ENCODE measurements at regions of chr9 and their contacts with region 1.

Region 1: DNA sequence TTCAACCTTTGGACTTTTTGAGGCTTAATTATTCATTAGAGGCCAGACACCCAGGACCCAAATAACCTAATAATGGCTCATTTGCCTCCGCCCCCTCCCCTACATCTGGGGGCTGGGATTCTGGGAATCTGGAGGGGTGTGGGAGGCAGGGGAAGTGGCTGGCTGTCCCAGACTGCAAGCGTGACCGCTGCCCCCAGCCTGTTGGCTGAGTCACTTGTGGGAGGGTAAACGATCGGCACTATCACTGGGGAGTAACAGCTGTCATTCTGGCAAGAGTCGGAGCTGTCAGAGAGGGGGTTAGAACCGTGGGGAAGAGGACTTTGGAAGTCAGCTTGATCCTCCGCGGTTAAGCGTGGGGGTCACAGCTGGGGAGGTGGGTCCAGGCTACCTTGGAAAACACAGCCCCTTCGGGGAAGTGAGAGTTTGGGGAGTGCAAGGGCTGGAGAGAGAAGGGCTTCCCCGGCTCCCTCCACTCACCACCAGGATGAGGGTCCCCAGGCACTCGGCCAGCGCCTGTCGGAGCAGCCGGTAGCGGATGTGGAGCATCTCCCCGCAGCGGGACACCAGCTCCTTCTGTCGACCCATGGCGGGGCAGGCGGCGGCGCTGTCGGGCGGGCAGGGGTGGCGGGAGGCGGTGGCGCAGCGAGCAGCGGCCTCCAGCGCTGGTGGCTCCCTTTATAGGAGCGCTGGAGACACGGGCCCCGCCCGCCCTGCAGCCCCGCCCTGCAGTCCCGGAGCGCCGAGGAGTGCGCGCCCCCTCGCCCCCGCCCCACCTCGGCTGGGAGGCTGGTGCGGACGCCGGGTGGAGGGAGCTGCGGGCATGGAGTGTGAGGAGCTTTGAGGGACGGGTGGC is at the start of gene AQP3:
- DNase-seq: peak; percentile 86
- ATAC-seq: peak; percentile 81
- H3K4me3 Mint-ChIP-seq: peak within 1 kb of the TSS; percentile 80
- H3K27ac Mint-ChIP-seq: no peak within 1 kb of the TSS
- H3K4me1 Mint-ChIP-seq: peaks cover 35% of the 10 kb centered on the region
- H3K27me3 Mint-ChIP-seq: peaks cover 28% of the 10 kb centered on the region
- CTCF ChIP-seq: no peak
- total RNA-seq, gene AQP3: 3.0 to 3.6 TPM (median 3.5 TPM) in 3 replicates

Region 2: DNA sequence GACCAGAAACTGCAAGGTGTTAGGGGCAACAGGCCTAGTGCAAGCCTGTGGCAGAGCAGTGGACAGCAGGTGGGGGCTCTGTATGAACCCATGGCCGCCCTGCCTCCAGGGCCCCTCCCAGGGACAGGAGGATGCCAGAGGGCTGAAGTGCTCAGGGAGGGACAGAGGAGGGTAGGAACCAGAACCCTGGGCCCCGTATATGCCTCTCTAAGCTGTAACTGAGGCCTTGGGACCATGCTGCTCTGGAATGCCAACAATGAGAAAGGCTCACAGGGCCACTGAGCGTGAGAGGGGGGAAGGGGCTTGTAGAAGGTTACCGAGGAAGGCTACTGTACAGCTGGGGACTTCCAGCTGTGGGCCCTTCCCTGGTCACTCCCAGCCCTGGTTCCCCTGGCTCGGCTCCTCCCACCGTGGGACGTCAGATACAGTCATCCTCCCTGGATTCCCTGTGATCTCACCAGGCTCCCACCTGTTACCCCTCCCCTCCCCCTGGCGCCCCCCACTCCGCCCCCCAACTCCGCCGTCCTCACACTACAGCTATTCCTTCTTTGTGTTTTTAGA is 65.9 kb before region 1 on chr9:
- CTCF ChIA-PET with region 1: interaction called, 110 read pairs
- POLR2A ChIA-PET with region 1: no interaction called
- DNase-seq: peak; percentile 87
- ATAC-seq: peak; percentile 95
- H3K4me3 Mint-ChIP-seq: no peak overlapping the region
- H3K27ac Mint-ChIP-seq: peak overlapping the region; percentile 70; the same call in 1 of the 2 replicates
- H3K4me1 Mint-ChIP-seq: peaks cover 19% of the 10 kb centered on the region
- H3K27me3 Mint-ChIP-seq: no peaks in the 10 kb centered on the region
- CTCF ChIP-seq: no peak

Region 3: DNA sequence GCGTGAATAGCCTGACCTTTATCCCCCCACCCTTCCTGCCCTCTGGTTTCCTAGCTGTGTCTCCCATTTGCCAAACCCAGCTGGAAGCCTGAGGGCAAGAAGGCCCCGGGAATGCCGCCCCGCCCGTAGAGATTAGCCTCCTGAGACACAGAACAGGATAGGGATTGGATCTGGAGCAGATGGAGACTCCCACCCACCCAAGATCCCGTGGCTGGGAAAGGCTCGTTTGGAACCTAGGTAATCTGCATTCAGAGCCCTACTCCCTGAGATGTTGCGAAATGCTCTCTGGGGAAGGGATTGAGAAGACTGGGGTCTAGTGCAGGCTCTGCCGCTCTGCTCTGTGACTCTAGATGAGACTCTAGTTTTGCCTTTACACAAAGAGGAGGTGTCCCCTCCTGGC is 10.7 kb before region 1 on chr9:
- CTCF ChIA-PET with region 1: interaction called, 69 read pairs
- POLR2A ChIA-PET with region 1: no interaction called
- DNase-seq: no peak
- ATAC-seq: peak; percentile 19
- H3K4me3 Mint-ChIP-seq: no peak overlapping the region
- H3K27ac Mint-ChIP-seq: no peak overlapping the region
- H3K4me1 Mint-ChIP-seq: peaks cover 17% of the 10 kb centered on the region
- H3K27me3 Mint-ChIP-seq: no peaks in the 10 kb centered on the region
- CTCF ChIP-seq: no peak

Region 4: GRCh38 chr9:33466565-33467495 is 19.7 kb after region 1 on chr9:
- CTCF ChIA-PET with region 1: interaction called, 66 read pairs
- POLR2A ChIA-PET with region 1: no interaction called
- DNase-seq: peak; percentile 88
- ATAC-seq: peak; percentile 93
- H3K4me3 Mint-ChIP-seq: no peak overlapping the region
- H3K27ac Mint-ChIP-seq: no peak overlapping the region
- H3K4me1 Mint-ChIP-seq: no peaks in the 10 kb centered on the region
- H3K27me3 Mint-ChIP-seq: no peaks in the 10 kb centered on the region
- CTCF ChIP-seq: peak; percentile 97

Measured in WTC11 (cell line).